Activated T-helper 2 cell treated with anti-CD3 and anti-CD28 coated beads, Interferon-gamma antibody, Interleukin-2, Interleukin-4, amounts not matched to agents 10 μg/mL and 5 μg/mL and 100 μg/mL, durations not matched to agents 14 hours and 24 hours and 36 hours (primary cell): ENCODE measurements at regions of chr5 and their contacts with region 1.

Region 1: GRCh38 chr5:181217111-181217802 is 5.8 kb upstream of the TRIM41 start:
- DNase-seq: peak; percentile 57
- H3K4me3 Mint-ChIP-seq: peak overlapping the region; percentile 88
- H3K27ac Mint-ChIP-seq: peak overlapping the region; percentile 91
- H3K4me1 Mint-ChIP-seq: peaks cover 43% of the 10 kb centered on the region
- H3K27me3 Mint-ChIP-seq: peaks cover 4% of the 10 kb centered on the region

Region 2: DNA sequence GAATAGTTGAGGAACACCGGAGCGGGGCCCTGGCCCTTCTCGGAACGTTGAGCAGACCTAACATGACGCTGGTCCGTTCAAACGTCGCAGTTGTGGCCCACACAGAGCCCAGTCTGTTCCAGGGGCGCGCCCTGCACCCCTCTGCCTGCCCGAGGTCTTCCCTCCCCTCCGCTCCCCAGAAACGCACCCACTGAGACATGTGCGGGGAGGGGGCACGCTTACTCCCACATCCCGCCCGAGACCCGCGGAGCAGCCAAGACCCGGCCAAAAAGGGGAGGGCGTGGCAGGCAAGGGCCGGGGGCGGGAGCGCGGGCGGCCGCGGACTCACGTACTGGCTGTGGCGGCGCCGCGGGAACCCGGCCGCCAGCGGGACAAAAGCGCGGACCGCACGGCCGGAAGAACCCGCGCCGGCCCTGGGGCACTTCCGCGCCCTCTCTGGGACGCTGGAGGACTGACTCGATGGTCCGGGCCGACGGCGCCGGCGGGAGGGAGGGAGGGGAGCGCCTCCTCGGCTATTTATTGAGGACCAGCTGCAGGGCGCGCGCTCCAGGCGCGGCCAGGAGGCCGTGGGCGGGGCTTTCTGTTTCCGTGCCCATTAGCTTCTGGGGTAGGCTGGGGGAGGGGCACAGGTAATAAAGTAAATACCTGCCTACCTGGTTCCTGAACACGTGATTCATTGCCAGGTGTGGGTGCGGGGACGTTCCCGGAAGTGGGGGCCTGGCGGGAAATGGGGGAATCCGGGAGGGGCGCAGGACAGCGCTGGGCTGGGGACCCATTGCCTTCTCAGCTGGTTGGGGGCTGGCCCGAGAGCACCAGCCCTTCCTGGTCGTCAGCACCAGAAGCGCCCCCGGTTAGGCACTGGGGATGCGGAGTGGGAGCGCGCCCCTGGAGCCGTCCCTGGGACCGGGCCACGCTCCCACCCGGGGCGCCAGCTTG is 356.1 kb before region 1 on chr5 and contains the start of gene ZFP62:
- intact Hi-C with region 1: no loop called
- DNase-seq: peak; percentile 83
- H3K4me3 Mint-ChIP-seq: peak within 1 kb of the TSS; percentile 96
- H3K27ac Mint-ChIP-seq: peak within 1 kb of the TSS; percentile 89
- H3K4me1 Mint-ChIP-seq: peaks cover 11% of the 10 kb centered on the region
- H3K27me3 Mint-ChIP-seq: peaks cover 4% of the 10 kb centered on the region
- total RNA-seq, gene ZFP62: 28.2 and 28.8 TPM in 2 replicates

Region 3: DNA sequence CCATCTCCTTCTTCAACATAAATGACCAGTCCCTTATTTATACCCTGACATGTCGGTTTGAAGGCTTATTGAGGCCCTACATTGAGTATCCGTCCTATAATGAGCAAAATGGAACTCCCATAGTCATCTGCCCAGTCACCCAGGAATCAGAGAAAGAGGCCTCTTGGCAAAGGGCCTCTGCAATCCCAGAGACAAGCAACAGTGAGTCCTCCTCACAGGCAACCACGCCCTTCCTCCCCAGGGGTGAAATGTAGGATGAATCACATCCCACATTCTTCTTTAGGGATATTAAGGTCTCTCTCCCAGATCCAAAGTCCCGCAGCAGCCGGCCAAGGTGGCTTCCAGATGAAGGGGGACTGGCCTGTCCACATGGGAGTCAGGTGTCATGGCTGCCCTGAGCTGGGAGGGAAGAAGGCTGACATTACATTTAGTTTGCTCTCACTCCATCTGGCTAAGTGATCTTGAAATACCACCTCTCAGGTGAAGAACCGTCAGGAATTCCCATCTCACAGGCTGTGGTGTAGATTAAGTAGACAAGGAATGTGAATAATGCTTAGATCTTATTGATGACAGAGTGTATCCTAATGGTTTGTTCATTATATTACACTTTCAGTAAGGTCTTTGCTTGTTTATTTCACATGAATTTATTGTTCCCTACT is 266.8 kb before region 1 on chr5:
- intact Hi-C with region 1: no loop called
- DNase-seq: no peak
- H3K4me3 Mint-ChIP-seq: no peak overlapping the region
- H3K27ac Mint-ChIP-seq: no peak overlapping the region
- H3K4me1 Mint-ChIP-seq: peaks cover 2% of the 10 kb centered on the region
- H3K27me3 Mint-ChIP-seq: peaks cover 2% of the 10 kb centered on the region

Region 4: GRCh38 chr5:181043285-181044092 is 173.8 kb before region 1 on chr5:
- intact Hi-C with region 1: no loop called
- DNase-seq: peak; percentile 6
- H3K4me3 Mint-ChIP-seq: no peak overlapping the region
- H3K27ac Mint-ChIP-seq: no peak overlapping the region
- H3K4me1 Mint-ChIP-seq: no peaks in the 10 kb centered on the region
- H3K27me3 Mint-ChIP-seq: peaks cover 11% of the 10 kb centered on the region

Region 5: GRCh38 chr5:181151146-181151545 is 66.1 kb before region 1 on chr5:
- intact Hi-C with region 1: no loop called
- DNase-seq: no peak
- H3K4me3 Mint-ChIP-seq: no peak overlapping the region
- H3K27ac Mint-ChIP-seq: no peak overlapping the region
- H3K4me1 Mint-ChIP-seq: peaks cover 8% of the 10 kb centered on the region
- H3K27me3 Mint-ChIP-seq: peaks cover 3% of the 10 kb centered on the region

Region 6: GRCh38 chr5:181167814-181168488 is 49.3 kb before region 1 on chr5:
- intact Hi-C with region 1: loop called (anchors 2 kb)
- DNase-seq: no peak
- H3K4me3 Mint-ChIP-seq: no peak overlapping the region
- H3K27ac Mint-ChIP-seq: no peak overlapping the region
- H3K4me1 Mint-ChIP-seq: peaks cover 53% of the 10 kb centered on the region
- H3K27me3 Mint-ChIP-seq: peaks cover 28% of the 10 kb centered on the region